CD8-positive, alpha-beta T cell (primary cell): ENCODE measurements at regions of chrX and their contacts with region 1.

Region 1: GRCh38 chrX:41116948-41117347 is 31.7 kb downstream of the USP9X start:
- DNase-seq: peak in 2 of 9 experiments; percentile 48 to 65
- ATAC-seq: peak; percentile 62
- H3K4me3 ChIP-seq: no peak overlapping the region
- H3K4me3 Mint-ChIP-seq: peak overlapping the region; percentile 63
- H3K27ac ChIP-seq: peak overlapping the region in 1 of 2 experiments; percentile 38
- H3K27ac Mint-ChIP-seq: peak overlapping the region; percentile 79
- H3K4me1 ChIP-seq: peaks cover 43% of the 10 kb centered on the region
- H3K4me1 Mint-ChIP-seq: peaks cover 74% of the 10 kb centered on the region
- H3K27me3 ChIP-seq: no peaks in the 10 kb centered on the region
- H3K27me3 Mint-ChIP-seq: no peaks in the 10 kb centered on the region
- CTCF ChIP-seq: no peak

Region 2: GRCh38 chrX:40792433-40792832 is 324.5 kb before region 1 on chrX:
- CTCF ChIA-PET with region 1: interaction called, 13 read pairs
- POLR2A ChIA-PET with region 1: no interaction called
- intact Hi-C with region 1: loop called in 1 of 2 experiments (anchors 10 kb)
- DNase-seq: no peak
- ATAC-seq: no peak
- H3K4me3 ChIP-seq: no peak overlapping the region
- H3K4me3 Mint-ChIP-seq: no peak overlapping the region
- H3K27ac ChIP-seq: no peak overlapping the region
- H3K27ac Mint-ChIP-seq: no peak overlapping the region
- H3K4me1 ChIP-seq: no peaks in the 10 kb centered on the region
- H3K4me1 Mint-ChIP-seq: peaks cover 3% of the 10 kb centered on the region
- H3K27me3 ChIP-seq: no peaks in the 10 kb centered on the region
- H3K27me3 Mint-ChIP-seq: no peaks in the 10 kb centered on the region
- CTCF ChIP-seq: no peak

Region 3: GRCh38 chrX:40877887-40878286 is 239.1 kb before region 1 on chrX:
- CTCF ChIA-PET with region 1: interaction called, 30 read pairs
- POLR2A ChIA-PET with region 1: interaction called, 7 read pairs
- intact Hi-C with region 1: loop called (anchors 1 kb)
- DNase-seq: peak in 2 of 9 experiments; percentile 42 to 55
- ATAC-seq: no peak
- H3K4me3 ChIP-seq: no peak overlapping the region
- H3K4me3 Mint-ChIP-seq: no peak overlapping the region
- H3K27ac ChIP-seq: no peak overlapping the region
- H3K27ac Mint-ChIP-seq: no peak overlapping the region
- H3K4me1 ChIP-seq: no peaks in the 10 kb centered on the region
- H3K4me1 Mint-ChIP-seq: no peaks in the 10 kb centered on the region
- H3K27me3 ChIP-seq: no peaks in the 10 kb centered on the region
- H3K27me3 Mint-ChIP-seq: peaks cover 2% of the 10 kb centered on the region
- CTCF ChIP-seq: peak; percentile 49

Region 4: DNA sequence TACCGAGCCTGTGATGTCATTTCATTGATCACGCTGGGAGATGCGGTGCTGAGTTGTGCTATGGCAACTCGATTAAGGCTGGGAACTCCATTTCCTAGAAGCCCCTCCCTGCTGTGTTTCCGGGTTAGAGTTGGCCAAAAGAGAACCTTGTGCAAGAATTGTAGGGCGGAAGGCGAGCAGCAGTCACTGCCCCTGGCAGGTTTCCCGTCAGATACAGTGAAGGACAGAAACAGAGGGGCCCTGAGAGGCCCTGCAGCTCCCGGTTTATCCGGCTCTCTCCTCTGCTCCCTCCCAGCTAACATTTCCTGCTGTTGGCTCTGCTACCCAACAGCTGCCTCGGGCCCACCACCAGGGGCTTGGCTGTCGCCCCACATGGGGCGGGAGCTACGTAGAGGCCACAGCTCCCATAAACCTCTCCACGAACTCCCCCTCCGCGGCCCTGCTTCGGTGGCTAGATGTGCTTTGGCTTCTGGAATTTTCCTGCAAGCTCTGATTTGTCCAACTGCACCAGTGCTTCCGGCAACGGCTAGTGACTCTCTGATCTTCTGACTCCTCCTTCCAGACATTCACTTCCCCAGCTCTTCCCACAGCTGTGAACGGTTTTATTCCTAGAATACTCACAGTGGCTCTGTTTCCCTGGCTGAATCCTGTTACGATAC is 106.6 kb before region 1 on chrX:
- CTCF ChIA-PET with region 1: interaction called, 7 read pairs
- POLR2A ChIA-PET with region 1: no interaction called
- intact Hi-C with region 1: loop called (anchors 5 kb)
- DNase-seq: peak; percentile 0 to 77 (median 44)
- ATAC-seq: peak; percentile 85
- H3K4me3 ChIP-seq: peak overlapping the region; percentile 38 to 59
- H3K4me3 Mint-ChIP-seq: peak overlapping the region; percentile 80
- H3K27ac ChIP-seq: peak overlapping the region; percentile 55 to 78
- H3K27ac Mint-ChIP-seq: peak overlapping the region; percentile 89
- H3K4me1 ChIP-seq: peaks cover 7% of the 10 kb centered on the region
- H3K4me1 Mint-ChIP-seq: peaks cover 15% of the 10 kb centered on the region
- H3K27me3 ChIP-seq: no peaks in the 10 kb centered on the region
- H3K27me3 Mint-ChIP-seq: no peaks in the 10 kb centered on the region
- CTCF ChIP-seq: no peak

Region 5: DNA sequence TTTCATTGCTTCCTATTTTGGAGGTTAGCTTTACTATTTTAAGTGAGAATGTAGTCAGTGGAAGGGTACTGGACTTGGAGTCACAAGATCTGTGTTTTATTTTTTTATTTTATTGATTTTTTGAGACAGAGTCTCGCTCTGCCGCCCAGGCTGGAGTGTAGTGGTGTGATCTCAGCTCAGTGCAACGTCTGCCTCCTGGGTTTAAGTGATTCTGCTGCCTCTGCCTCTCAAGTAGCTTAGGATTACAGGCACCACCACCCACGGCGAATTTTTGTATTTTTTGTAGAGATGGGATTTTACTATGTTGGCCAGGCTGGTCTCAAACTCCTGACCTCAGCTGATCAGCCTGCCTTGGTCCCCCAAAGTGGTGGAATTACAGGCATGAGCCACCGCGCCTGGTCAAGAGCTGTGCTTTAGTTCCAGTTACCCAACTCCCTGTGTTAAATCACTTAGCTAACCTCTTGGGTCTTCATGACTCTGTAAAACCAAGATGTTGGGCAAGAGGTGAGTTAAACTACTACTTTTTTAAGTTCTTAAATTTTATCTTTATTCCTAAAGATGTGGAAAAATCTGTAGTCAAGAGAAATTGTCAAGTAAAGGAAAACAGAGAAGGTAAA is 20.5 kb before region 1 on chrX:
- CTCF ChIA-PET with region 1: interaction called, 5 read pairs
- POLR2A ChIA-PET with region 1: interaction called, 3 read pairs
- intact Hi-C with region 1: loop called in 1 of 2 experiments (anchors 2 kb)
- DNase-seq: no peak
- ATAC-seq: no peak
- H3K4me3 ChIP-seq: no peak overlapping the region
- H3K4me3 Mint-ChIP-seq: peak overlapping the region; percentile 56
- H3K27ac ChIP-seq: no peak overlapping the region
- H3K27ac Mint-ChIP-seq: no peak overlapping the region
- H3K4me1 ChIP-seq: peaks cover 59% of the 10 kb centered on the region
- H3K4me1 Mint-ChIP-seq: peaks cover 72% of the 10 kb centered on the region
- H3K27me3 ChIP-seq: no peaks in the 10 kb centered on the region
- H3K27me3 Mint-ChIP-seq: no peaks in the 10 kb centered on the region
- CTCF ChIP-seq: no peak